ENCODE measurements at regions of chr7 and their contacts with region 1.

Region 1: GRCh38 chr7:44498230-44498954 is 7.9 kb upstream of the NUDCD3 start:
- DNase-seq: no peak
- ATAC-seq: peak; percentile 74

Region 2: GRCh38 chr7:44460325-44460724 is 38.1 kb before region 1 on chr7:
- intact Hi-C with region 1: no loop called
- DNase-seq: no peak
- ATAC-seq: no peak

Region 3: DNA sequence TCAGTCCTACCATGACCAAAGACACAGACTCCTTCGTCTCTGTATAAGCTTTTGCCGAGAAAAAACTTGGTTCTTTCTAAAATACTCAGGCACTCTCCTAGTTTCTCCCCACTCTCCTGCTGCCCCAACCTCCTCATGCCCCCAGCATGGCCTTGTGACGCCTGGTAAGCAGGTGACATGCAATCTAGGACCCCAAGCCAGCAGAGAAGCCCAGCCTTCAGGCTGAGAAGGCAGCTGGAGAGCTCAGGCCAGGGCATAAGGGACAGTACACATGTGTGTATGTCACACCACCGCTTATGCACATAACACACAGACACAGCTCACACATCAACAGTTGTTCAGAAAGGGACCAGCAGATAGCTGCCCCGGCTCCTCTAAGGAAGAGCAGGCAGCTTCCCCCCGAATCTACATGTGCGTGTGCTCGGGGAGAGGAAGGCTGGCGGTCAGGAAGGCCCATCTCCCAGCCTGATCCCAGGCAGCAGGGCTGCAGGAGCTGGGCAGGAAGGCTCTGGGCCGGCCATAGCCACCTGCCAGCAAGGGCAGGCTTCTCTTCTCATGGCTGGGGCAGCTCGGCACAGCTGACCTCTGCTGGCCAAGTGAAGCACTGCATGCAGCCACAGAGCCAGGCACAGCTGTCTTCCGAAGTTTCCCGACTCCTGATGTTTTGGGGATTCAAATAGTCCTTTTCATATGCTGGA is 66.9 kb after region 1 on chr7:
- intact Hi-C with region 1: loop called (anchors 5 kb)
- DNase-seq: peak; percentile 83
- ATAC-seq: peak; percentile 91